Mammary epithelial cell (primary cell): ENCODE measurements at regions of chr9 and their contacts with region 1.

Region 1: DNA sequence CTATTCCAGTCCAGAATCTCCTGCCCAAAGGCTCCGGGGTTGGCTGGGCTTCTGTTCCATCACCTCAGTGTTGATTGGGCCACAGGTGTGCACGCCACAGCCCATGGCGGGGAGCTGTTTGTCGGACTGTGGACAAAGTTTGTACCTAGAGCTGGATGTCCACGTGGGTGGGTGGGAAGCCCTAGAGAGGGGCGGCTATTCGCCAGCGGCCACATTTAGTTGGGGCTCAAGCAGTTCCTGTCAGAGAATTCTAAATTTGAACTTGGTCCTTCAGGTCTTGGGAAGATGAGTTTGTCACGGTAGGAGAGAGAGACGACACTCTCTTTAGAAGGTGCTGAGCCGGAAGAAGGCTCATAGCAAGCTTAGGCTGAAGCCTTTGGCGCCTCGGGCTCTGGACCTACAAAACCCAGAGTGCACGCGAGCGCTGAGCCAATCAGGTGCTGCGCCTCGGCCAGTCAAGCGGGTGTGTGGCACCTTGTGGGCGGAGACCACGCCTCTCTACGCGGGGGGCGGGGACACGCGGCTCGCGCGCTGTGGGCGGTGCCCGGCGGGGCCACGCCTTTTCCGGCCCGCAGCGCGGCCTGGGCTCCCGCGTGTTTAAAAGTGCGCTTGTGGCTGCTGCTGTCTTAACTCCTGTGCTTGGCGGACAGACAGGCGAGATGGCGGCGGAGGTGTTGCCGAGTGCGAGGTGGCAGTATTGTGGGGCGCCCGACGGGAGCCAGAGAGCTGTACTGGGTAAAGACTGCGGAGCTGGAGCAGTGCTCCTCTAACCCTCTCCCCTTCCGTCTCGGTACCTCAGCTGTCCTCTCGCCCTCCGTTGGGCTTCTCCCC is at the start of gene POLR1E:
- DNase-seq: peak; percentile 96
- H3K4me3 ChIP-seq: peak within 1 kb of the TSS; percentile 89 to 90 (median 89)
- H3K27ac ChIP-seq: peak within 1 kb of the TSS; percentile 55
- H3K4me1 ChIP-seq: peaks cover 17% of the 10 kb centered on the region
- H3K27me3 ChIP-seq: no peaks in the 10 kb centered on the region
- CTCF ChIP-seq: no peak
- total RNA-seq, gene POLR1E: 33.8 to 34.5 TPM

Region 2: GRCh38 chr9:37465249-37466036 is 20.2 kb before region 1 on chr9 and contains the start of gene ZBTB5:
- CTCF ChIA-PET with region 1: no interaction called
- dilution Hi-C with region 1: no loop called
- in situ Hi-C with region 1: no loop called
- intact Hi-C with region 1: loop called (anchors 2 kb)
- DNase-seq: peak; percentile 100
- H3K4me3 ChIP-seq: peak within 1 kb of the TSS; percentile 85 to 100 (median 96)
- H3K27ac ChIP-seq: peak within 1 kb of the TSS; percentile 91
- H3K4me1 ChIP-seq: peaks cover 23% of the 10 kb centered on the region
- H3K27me3 ChIP-seq: no peaks in the 10 kb centered on the region
- CTCF ChIP-seq: no peak
- total RNA-seq, gene ZBTB5: 7.6 to 20.5 TPM

Region 3: DNA sequence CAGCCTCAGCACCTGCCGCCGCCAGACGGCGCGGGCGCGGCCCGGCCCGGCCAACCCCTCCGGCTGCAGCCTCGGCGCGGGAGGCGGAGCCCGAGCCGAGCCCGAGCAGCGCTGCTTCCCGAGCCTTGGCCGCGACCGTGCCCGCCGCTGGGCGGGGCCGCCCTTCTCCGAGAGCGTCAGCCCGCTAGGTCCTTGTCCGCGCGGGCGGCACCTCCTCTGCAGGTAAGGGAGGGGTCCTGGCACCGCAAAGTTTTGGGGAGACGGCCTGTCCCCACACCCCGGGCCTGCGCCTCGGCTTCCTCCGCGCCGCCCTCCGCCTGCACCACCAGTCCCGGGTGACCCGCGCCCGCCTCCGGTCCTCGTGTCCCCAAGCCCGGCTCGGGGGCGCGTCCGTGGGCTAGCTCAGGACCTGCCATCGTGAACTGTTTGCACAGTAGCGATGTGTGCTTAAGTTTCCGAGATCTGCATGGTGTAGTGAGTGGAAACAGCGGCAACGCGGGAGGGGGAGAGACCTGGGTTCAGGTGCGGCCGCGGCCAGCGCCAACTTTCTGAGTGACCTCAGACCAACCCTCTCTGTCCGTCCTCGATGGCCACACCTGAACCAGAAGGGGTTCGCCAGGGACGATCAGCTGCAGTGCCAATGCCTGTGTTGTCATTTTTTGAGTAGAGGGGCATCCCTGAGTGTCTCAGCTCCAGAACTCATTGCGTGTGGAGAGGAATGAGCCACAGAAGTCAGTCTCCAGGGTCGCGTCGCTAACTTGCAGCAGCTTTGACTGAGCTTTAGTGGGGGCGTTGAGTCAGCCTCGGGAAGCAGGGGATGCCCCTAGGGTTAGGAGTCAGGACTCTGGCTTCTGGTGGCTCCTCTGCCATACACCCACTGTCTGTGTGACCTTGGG is 165.5 kb after region 1 on chr9 and contains the start of gene FRMPD1:
- CTCF ChIA-PET with region 1: no interaction called
- dilution Hi-C with region 1: no loop called
- in situ Hi-C with region 1: no loop called
- intact Hi-C with region 1: loop called (anchors 10 kb)
- DNase-seq: peak; percentile 58
- H3K4me3 ChIP-seq: peak within 1 kb of the TSS; percentile 30 to 55 (median 54)
- H3K27ac ChIP-seq: no peak within 1 kb of the TSS
- H3K4me1 ChIP-seq: peaks cover 10% of the 10 kb centered on the region
- H3K27me3 ChIP-seq: peaks cover 24% of the 10 kb centered on the region
- CTCF ChIP-seq: no peak
- total RNA-seq, gene FRMPD1: 0.17 to 0.26 TPM

Region 4: GRCh38 chr9:37784616-37785483 is 299.2 kb after region 1 on chr9 and contains the start of gene EXOSC3:
- CTCF ChIA-PET with region 1: no interaction called
- dilution Hi-C with region 1: no loop called
- in situ Hi-C with region 1: loop called in 1 of 2 experiments (anchors 25 kb)
- intact Hi-C with region 1: no loop called
- DNase-seq: peak; percentile 92
- H3K4me3 ChIP-seq: peak within 1 kb of the TSS; percentile 81 to 97 (median 86)
- H3K27ac ChIP-seq: peak within 1 kb of the TSS; percentile 60
- H3K4me1 ChIP-seq: peaks cover 11% of the 10 kb centered on the region
- H3K27me3 ChIP-seq: no peaks in the 10 kb centered on the region
- CTCF ChIP-seq: peak; percentile 9 to 24
- total RNA-seq, gene EXOSC3: 24.7 to 46.5 TPM

Region 5: DNA sequence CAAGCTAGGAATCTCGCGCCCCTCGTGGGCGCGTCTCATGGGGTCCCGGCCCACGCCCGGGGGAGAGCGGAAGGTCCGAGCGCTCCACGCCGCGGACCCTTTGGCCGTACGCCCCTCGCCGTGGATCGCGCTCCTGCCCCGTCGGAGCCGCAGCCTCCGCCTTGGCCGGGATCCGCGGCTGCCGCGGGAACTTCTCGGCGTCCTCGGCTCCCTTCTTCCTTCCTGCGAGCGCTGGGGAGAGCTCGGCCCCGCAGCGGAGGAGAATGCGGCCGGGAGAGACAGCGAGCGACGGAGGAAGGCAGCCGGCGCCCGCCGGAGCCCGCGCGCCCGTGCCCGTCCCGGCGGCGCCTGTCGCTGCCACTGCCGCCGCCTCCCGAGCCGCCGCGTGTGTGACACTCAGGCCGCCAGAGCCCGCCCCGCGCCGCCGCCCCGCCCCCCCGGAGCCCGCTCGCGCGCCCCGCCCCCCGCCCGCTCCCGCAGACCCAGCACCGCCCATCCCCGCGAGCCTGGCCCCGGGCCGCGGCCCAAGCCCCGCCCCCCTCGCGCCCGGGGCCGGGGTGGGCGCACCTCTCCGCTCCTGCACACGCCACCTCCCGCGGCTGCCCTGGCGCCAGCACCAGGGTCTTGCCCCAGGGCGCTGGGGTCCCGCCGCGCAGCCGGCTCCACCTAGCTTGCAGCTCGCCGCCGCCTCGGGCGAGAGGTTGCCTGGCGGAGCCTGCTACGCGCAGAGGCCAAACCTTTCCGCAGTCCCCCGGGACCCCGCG is 583.4 kb after region 1 on chr9 and contains the start of gene SHB:
- CTCF ChIA-PET with region 1: no interaction called
- dilution Hi-C with region 1: no loop called
- in situ Hi-C with region 1: no loop called
- intact Hi-C with region 1: loop called (anchors 10 kb)
- DNase-seq: peak; percentile 58
- H3K4me3 ChIP-seq: peak within 1 kb of the TSS; percentile 79 to 90 (median 84)
- H3K27ac ChIP-seq: peak within 1 kb of the TSS; percentile 44
- H3K4me1 ChIP-seq: peaks cover 21% of the 10 kb centered on the region
- H3K27me3 ChIP-seq: no peaks in the 10 kb centered on the region
- CTCF ChIP-seq: no peak
- total RNA-seq, gene SHB: 30.5 to 31.5 TPM

Region 6: DNA sequence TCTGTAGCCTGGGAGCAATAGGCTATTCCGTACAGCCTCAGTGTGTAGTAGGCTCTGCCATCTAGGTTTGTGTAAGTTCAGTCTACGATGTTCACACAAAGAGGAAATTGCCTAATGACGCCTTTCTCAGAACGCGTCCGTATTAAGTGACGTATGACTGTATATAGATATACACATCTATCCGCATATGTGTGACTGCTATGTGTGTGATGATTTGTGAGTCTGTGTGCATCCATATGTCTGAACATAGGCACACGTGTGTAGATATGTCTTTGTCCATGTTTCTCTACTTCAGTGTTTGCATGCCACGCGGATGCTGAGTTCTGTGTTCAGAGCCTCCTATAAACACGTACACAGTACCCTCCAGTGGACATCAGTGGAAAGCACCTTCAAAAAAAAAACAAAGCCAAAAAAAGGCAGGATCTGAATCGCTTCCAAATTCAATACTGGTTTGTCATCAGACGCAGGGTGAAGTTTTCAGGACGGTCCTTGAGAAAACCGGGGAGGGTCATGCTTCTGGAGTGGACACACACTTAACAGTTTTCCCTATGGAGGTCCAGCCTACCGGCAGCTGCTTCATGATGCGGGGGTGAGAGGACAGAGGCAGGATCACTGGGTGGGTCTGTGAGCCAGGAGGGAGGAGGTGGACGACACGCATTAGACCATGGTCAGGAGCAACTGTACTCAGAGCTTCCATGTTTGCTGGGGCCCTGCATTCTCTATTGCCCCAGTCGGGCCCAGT is 877.4 kb after region 1 on chr9:
- CTCF ChIA-PET with region 1: no interaction called
- dilution Hi-C with region 1: no loop called
- in situ Hi-C with region 1: no loop called
- intact Hi-C with region 1: loop called (anchors 10 kb)
- DNase-seq: peak; percentile 61
- H3K4me3 ChIP-seq: no peak overlapping the region
- H3K27ac ChIP-seq: no peak overlapping the region
- H3K4me1 ChIP-seq: peaks cover 3% of the 10 kb centered on the region
- H3K27me3 ChIP-seq: no peaks in the 10 kb centered on the region
- CTCF ChIP-seq: peak; percentile 60 to 71